ENCODE measurements at regions of chr11 and their contacts with region 1.

Region 1: DNA sequence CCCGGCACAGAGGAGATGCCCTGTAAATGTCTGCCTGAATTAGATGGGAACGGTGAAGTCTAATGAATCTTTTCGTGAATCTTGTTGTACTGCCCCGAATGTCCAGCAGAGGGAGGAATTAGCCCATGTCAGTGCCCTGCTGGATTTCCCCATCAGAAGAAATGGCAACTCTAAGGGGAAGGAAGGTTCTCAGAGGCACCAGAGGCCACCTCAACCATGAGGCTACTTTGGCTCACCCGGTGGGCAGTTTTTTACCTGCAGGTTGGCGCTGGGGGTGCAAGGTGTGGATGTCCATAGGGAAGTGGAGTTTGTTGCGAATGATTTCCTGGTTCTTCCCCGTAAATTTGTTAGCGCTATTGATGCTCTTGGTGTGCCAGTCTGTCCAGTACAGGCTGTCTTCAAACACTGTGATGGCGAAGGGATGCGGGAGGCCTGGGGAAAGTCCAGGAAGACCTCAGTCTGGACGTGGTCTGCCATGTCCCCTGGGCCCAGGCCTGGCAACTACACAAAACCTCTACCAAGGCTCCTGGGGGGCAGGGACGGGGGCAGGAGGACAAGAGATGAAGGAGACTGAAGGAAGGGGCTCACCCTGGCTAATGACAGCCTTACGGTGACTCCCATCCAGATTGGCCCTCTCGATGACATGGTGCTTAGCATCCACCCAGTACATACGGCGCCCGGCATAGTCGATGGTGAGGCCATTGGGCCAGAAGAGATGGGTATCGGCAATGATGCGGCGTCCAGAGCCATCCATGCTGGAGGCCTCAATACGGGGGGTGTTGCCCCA is 28.5 kb downstream of the LRP4 start:
- DNase-seq: peak; percentile 62 to 83 (median 68)
- H3K4me3 ChIP-seq: no peak overlapping the region
- H3K27ac ChIP-seq: no peak overlapping the region
- H3K4me1 ChIP-seq: no peaks in the 10 kb centered on the region
- H3K27me3 ChIP-seq: no peaks in the 10 kb centered on the region
- CTCF ChIP-seq: peak; percentile 72 to 92 (median 86)
- EP300 ChIP-seq: no peak
- POLR2A ChIP-seq: no peak

Region 2: GRCh38 chr11:46278387-46279125 is 611.3 kb before region 1 on chr11:
- intact Hi-C with region 1: no loop called
- DNase-seq: peak; percentile 61 to 78 (median 63)
- H3K4me3 ChIP-seq: peak overlapping the region; percentile 59
- H3K27ac ChIP-seq: peak overlapping the region in 1 of 2 donors; percentile 39
- H3K4me1 ChIP-seq: peaks cover 26% of the 10 kb centered on the region
- H3K27me3 ChIP-seq: no peaks in the 10 kb centered on the region
- CTCF ChIP-seq: peak in 2 of 3 donors; percentile 41 to 56
- EP300 ChIP-seq: no peak
- POLR2A ChIP-seq: no peak

Region 3: DNA sequence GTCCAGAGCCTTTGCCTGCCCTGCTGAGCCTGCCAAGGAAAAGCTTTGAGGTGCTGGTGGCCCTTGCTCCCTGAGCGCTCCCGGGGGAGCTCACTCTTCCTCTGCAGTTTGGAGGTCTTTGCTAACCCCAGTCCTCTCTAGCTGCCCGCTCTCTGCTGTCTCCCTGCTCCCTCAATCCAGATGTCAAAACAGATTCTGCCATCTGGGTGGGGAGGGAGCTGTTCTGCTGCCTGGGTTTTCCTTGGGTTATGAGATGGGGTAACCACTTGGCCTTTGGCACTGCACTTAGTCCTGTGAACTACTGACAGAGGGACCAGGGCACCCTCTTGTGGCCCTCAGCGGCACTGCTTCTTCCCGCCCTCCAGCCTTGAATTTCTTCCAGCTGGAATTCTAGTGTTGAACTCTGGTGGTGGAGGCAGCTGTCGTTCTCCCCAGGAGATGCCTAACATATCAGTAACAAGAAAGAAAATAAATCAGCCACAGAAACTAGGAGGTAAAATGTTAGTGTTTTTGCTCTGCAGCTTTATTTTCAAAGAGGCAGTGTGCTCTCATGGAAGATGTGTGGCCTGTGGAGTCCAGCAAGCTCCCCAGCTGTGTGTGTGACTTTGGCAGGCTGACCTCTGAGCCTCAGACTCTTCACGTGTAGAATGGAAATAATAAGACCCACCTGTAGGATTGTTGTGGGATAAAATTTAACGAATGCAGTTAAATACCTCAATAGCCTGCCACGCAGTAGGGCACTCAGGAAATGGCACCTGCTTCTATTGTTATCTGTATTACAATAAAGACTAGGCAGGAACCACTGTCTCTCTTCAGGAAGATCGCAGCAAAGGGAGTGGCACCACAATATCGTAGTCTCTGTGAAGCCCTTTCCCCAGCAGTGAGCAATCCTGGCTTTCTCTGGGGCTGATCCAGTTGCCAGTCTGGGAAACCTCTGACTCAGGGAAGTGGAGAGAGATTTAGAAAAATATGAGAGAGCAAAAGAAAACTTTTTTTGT is 263.4 kb after region 1 on chr11:
- intact Hi-C with region 1: loop called in 3 of 4 experiments (anchors 2 to 5 kb)
- DNase-seq: peak; percentile 74 to 89 (median 86)
- H3K4me3 ChIP-seq: no peak overlapping the region
- H3K27ac ChIP-seq: peak overlapping the region in 1 of 2 donors; percentile 23
- H3K4me1 ChIP-seq: peaks cover 5% of the 10 kb centered on the region
- H3K27me3 ChIP-seq: no peaks in the 10 kb centered on the region
- CTCF ChIP-seq: peak; percentile 90 to 93 (median 91)
- EP300 ChIP-seq: no peak
- POLR2A ChIP-seq: no peak

Region 4: GRCh38 chr11:47161134-47161854 is 271.4 kb after region 1 on chr11:
- intact Hi-C with region 1: loop called in 2 of 4 experiments (anchors 2 to 5 kb)
- DNase-seq: peak; percentile 58 to 74 (median 64)
- H3K4me3 ChIP-seq: no peak overlapping the region
- H3K27ac ChIP-seq: peak overlapping the region; percentile 16 to 34
- H3K4me1 ChIP-seq: peaks cover 3% of the 10 kb centered on the region
- H3K27me3 ChIP-seq: no peaks in the 10 kb centered on the region
- CTCF ChIP-seq: peak; percentile 26 to 52 (median 38)
- EP300 ChIP-seq: no peak
- POLR2A ChIP-seq: no peak